Activated CD4-positive, alpha-beta T cell treated with anti-CD3 and anti-CD28 coated beads, Interleukin-2, amount 10 ng/mL, durations not matched to agents 7 days and 5 days (primary cell): ENCODE measurements at regions of chrX and their contacts with region 1.

Region 1: GRCh38 chrX:23901805-23902204 is 5.9 kb downstream of the APOO start:
- DNase-seq: peak; percentile 53
- H3K4me3 Mint-ChIP-seq: no peak overlapping the region
- H3K27ac Mint-ChIP-seq: no peak overlapping the region
- H3K4me1 Mint-ChIP-seq: peaks cover 18% of the 10 kb centered on the region
- H3K27me3 Mint-ChIP-seq: no peaks in the 10 kb centered on the region

Region 2: DNA sequence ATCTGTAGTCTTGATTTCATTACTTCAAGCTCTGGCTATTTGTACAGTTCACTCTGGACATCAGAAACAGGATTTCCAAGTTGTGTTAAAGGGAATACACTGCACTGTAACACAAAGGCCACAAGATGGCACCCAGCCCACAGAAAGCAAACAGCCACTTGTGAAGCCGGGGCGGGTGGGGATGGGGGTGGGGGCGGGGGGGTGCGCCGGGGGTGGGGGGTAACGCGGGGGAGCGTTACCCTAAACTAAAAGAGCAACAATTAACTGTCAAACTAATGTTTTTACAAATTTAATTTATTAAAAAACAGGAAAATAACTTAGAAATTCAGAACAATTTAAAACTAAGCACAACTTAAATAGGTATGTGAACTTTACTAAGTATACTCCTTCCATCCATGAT is 207.2 kb before region 1 on chrX:
- CTCF ChIA-PET with region 1: interaction called, 24 read pairs
- POLR2A ChIA-PET with region 1: interaction called, 4 read pairs
- DNase-seq: peak; percentile 55
- H3K4me3 Mint-ChIP-seq: no peak overlapping the region
- H3K27ac Mint-ChIP-seq: no peak overlapping the region
- H3K4me1 Mint-ChIP-seq: peaks cover 2% of the 10 kb centered on the region
- H3K27me3 Mint-ChIP-seq: no peaks in the 10 kb centered on the region

Region 3: DNA sequence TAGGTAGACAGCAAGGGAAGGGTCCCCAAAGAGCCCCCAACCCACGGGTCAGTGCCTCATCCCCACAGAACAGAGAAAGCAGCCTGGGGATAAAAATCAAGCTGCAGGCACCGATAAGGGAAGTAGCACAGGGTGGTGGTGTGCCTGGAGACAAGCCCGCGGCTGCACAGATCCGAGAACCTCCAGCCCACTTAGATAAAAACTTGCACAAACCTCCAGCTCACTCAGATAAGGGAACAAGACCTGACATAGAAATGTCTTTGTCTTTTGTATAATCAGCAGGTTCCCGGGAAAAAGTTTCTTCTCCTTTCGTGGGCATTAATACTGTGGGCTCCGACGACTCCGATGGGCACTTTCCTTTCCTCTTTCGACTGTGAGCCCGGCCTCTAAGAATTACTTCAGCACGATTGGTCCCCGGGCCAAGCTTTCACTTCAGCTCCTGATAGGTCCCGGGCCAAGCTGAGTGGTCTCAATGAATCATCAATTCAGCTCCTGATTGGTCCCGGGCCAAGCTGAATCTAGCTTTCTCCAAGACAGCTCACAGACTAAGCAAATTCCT is 202.1 kb before region 1 on chrX:
- CTCF ChIA-PET with region 1: interaction called, 24 read pairs
- POLR2A ChIA-PET with region 1: interaction called, 4 read pairs
- DNase-seq: peak; percentile 5
- H3K4me3 Mint-ChIP-seq: peak overlapping the region; percentile 43
- H3K27ac Mint-ChIP-seq: peak overlapping the region; percentile 31
- H3K4me1 Mint-ChIP-seq: peaks cover 5% of the 10 kb centered on the region
- H3K27me3 Mint-ChIP-seq: no peaks in the 10 kb centered on the region

Region 4: GRCh38 chrX:23782863-23783568 is 118.8 kb before region 1 on chrX and contains the start of gene SAT1:
- CTCF ChIA-PET with region 1: interaction called, 16 read pairs
- POLR2A ChIA-PET with region 1: interaction called, 9 read pairs
- DNase-seq: peak; percentile 94
- H3K4me3 Mint-ChIP-seq: peak within 1 kb of the TSS; percentile 95
- H3K27ac Mint-ChIP-seq: peak within 1 kb of the TSS; percentile 98
- H3K4me1 Mint-ChIP-seq: peaks cover 36% of the 10 kb centered on the region
- H3K27me3 Mint-ChIP-seq: no peaks in the 10 kb centered on the region
- total RNA-seq, gene SAT1: 86.3 to 89.7 TPM

Region 5: DNA sequence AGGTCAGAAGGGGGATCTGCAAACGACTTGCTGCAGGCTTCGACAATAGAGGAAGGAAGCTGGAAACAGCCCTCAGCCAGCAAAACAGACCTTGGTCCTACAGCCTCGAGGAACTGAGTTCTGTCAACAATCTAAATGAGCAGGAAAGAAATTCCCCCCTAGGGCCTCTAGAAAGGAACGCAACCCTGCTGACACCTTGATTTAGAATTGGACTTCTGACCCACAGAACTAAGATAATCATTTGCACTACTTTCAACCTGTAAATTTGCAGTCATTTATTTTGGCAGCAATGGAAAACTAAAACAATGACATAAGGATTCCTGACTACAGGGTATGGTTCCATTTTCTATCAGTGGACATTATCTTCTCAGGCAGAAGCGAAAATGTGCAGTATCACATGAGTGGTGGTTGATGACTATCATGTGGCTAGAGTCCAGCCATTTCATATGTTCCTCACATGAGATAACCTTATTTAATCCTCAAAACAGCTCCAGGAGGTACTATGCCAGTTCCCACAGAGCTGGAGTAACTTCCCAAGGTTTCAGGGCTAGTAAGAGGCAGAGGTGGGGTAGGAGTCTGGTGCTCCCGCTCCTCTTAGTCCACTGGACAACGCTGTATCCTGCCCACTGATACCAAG is 57.2 kb before region 1 on chrX:
- CTCF ChIA-PET with region 1: no interaction called
- POLR2A ChIA-PET with region 1: no interaction called
- DNase-seq: no peak
- H3K4me3 Mint-ChIP-seq: no peak overlapping the region
- H3K27ac Mint-ChIP-seq: no peak overlapping the region
- H3K4me1 Mint-ChIP-seq: no peaks in the 10 kb centered on the region
- H3K27me3 Mint-ChIP-seq: no peaks in the 10 kb centered on the region